ENCODE measurements at regions of chr17 and their contacts with region 1.

Region 1: GRCh38 chr17:5587438-5588032 is 3.2 kb upstream of the NLRP1 start:
- DNase-seq: peak; percentile 86
- H3K4me3 ChIP-seq: no peak overlapping the region
- H3K27ac ChIP-seq: no peak overlapping the region
- H3K4me1 ChIP-seq: peaks cover 27 to 35% (median 30%) of the 10 kb centered on the region in 4 donors
- H3K27me3 ChIP-seq: peaks cover 0 to 17% (median 4%) of the 10 kb centered on the region in 4 donors
- CTCF ChIP-seq: peak; percentile 88 to 92 (median 89)
- EP300 ChIP-seq: no peak
- POLR2A ChIP-seq: no peak

Region 2: GRCh38 chr17:5665164-5665563 is 77.6 kb after region 1 on chr17:
- intact Hi-C with region 1: no loop called
- DNase-seq: no peak
- H3K4me3 ChIP-seq: no peak overlapping the region
- H3K27ac ChIP-seq: no peak overlapping the region
- H3K4me1 ChIP-seq: no peaks in the 10 kb centered on the region
- H3K27me3 ChIP-seq: peaks cover 0 to 74% (median 0%) of the 10 kb centered on the region in 4 donors
- CTCF ChIP-seq: no peak
- EP300 ChIP-seq: no peak
- POLR2A ChIP-seq: no peak

Region 3: DNA sequence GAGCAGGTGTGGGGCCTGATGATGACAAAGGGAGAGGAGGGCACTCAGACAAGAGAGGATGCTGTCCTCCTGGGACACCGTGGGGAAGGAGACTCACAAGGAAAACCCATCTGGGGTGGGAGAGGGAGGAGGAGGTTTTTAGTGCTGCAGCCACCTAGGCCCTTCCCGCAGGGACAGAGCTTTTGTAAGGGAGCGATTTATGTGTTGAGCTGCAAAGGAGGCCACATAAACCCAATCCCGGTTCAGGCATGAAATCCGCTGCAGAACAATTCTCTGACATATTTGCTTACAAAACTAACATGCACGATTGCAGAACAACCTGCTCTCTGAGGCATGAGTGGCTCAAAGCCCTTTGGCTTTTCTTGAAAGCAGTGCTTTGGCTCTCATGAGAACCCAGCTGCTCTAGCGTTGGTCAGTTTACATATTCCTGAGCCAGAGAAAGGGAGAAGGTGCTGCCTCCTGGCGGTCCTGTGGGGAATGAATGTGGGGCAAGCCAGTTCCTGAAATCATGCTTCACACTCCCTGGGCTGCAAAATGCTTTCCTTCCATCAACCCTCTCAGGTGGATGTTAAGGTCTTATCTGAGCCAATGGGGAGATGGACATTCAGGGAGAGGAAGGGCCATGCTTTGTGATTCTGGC is 119.2 kb after region 1 on chr17:
- intact Hi-C with region 1: loop called (anchors 10 kb)
- DNase-seq: no peak
- H3K4me3 ChIP-seq: no peak overlapping the region
- H3K27ac ChIP-seq: no peak overlapping the region
- H3K4me1 ChIP-seq: no peaks in the 10 kb centered on the region
- H3K27me3 ChIP-seq: peaks cover 0 to 35% (median 0%) of the 10 kb centered on the region in 4 donors
- CTCF ChIP-seq: peak; percentile 32 to 58 (median 41)
- EP300 ChIP-seq: no peak
- POLR2A ChIP-seq: no peak

Region 4: GRCh38 chr17:5785867-5786509 is 198.5 kb after region 1 on chr17:
- intact Hi-C with region 1: no loop called
- DNase-seq: no peak
- H3K4me3 ChIP-seq: no peak overlapping the region
- H3K27ac ChIP-seq: no peak overlapping the region
- H3K4me1 ChIP-seq: no peaks in the 10 kb centered on the region
- H3K27me3 ChIP-seq: peaks cover 0 to 3% (median 0%) of the 10 kb centered on the region in 4 donors
- CTCF ChIP-seq: no peak
- EP300 ChIP-seq: no peak
- POLR2A ChIP-seq: no peak

Region 5: GRCh38 chr17:6421700-6422604 is 834.4 kb after region 1 on chr17:
- intact Hi-C with region 1: loop called (anchors 1 kb)
- DNase-seq: peak; percentile 94
- H3K4me3 ChIP-seq: no peak overlapping the region
- H3K27ac ChIP-seq: no peak overlapping the region
- H3K4me1 ChIP-seq: peaks cover 0 to 5% (median 0%) of the 10 kb centered on the region in 4 donors
- H3K27me3 ChIP-seq: peaks cover 0 to 71% (median 0%) of the 10 kb centered on the region in 4 donors
- CTCF ChIP-seq: peak; percentile 80 to 85 (median 83)
- EP300 ChIP-seq: no peak
- POLR2A ChIP-seq: no peak